Activated T-helper 1 cell treated with anti-CD3 and anti-CD28 coated beads, Interleukin-12 subunit alpha, Interleukin-12 subunit beta, Interleukin-2, Interleukin-4 antibody, amounts not matched to agents 30 ng/mL and 10 ng/mL and 1 ng/mL, durations not matched to agents 14 hours and 24 hours and 36 hours (primary cell): ENCODE measurements at regions of chr17 and their contacts with region 1.

Region 1: DNA sequence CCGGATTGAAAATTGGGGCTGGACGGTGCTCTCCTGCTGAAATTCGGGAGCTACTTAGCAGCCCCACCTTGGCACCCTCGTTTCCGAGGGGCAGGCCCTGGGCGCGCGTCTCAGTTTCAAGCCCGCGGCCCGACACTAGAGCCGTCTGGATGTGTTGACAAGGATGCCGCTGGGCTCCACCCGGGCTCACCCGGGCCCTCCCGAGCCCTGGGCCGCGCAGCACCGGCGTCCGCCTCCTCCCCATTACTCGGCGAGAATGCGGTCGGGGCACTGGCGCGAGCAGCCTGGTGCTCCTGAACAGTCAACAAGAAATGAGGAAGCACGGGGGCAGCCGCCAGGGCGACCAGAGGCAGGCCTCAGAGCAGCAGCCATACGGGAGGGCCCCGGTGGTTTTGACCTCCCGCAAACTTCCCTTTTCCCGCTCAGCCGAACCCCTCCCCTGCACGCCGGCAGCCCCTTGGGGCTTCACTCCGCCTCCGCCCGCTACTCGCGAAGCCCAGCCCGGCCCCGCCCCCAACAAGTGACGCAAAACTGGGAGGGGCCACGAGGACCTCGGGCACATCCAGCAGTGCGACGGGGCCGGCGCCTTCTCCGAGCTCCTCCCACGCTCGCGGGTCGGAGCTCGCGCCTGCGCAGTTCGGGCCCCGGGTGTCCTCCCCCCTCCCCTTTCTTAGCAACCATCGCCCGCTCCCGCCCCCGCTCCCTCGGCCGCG is 447 bp upstream of the SEC14L1 start:
- DNase-seq: peak; percentile 99
- H3K4me3 Mint-ChIP-seq: peak overlapping the region; percentile 74
- H3K27ac Mint-ChIP-seq: peak overlapping the region; percentile 96
- H3K4me1 Mint-ChIP-seq: peaks cover 64% of the 10 kb centered on the region
- H3K27me3 Mint-ChIP-seq: peaks cover 2% of the 10 kb centered on the region

Region 2: GRCh38 chr17:76726231-76726775 is 414.0 kb before region 1 on chr17 and contains the start of gene JMJD6:
- intact Hi-C with region 1: loop called (anchors 2 kb)
- DNase-seq: peak; percentile 95
- H3K4me3 Mint-ChIP-seq: peak within 1 kb of the TSS; percentile 95
- H3K27ac Mint-ChIP-seq: peak within 1 kb of the TSS; percentile 96
- H3K4me1 Mint-ChIP-seq: peaks cover 42% of the 10 kb centered on the region
- H3K27me3 Mint-ChIP-seq: no peaks in the 10 kb centered on the region
- total RNA-seq, gene JMJD6: 80.5 TPM in 2 replicates

Region 3: GRCh38 chr17:77096570-77097214 is 43.6 kb before region 1 on chr17:
- intact Hi-C with region 1: loop called (anchors 2 kb)
- DNase-seq: no peak
- H3K4me3 Mint-ChIP-seq: no peak overlapping the region
- H3K27ac Mint-ChIP-seq: no peak overlapping the region
- H3K4me1 Mint-ChIP-seq: peaks cover 36% of the 10 kb centered on the region
- H3K27me3 Mint-ChIP-seq: no peaks in the 10 kb centered on the region

Region 4: DNA sequence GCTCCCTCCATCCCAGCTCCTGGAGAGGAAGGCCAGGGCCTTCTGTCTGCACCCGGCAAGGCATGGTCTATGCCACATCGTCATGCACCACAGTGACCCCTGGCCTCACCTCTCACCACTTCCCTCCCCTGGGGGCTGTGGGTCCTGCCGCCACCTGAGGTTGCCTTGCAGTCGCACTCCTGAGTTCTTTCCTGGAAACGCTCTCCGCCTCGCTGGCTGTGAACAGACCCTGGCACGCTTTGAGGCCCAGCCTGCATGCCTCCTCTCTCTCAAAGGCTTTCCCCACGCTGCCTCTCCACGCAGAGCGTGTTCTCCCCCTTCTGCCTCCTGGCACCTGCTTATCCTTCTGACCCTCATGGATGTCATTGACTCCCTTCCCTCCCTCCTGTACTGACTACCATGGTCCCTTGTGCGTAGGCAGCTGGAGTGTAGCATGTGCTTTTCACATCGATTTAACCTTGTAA is 45.9 kb after region 1 on chr17:
- intact Hi-C with region 1: loop called (anchors 1 kb)
- DNase-seq: peak; percentile 33
- H3K4me3 Mint-ChIP-seq: no peak overlapping the region
- H3K27ac Mint-ChIP-seq: no peak overlapping the region
- H3K4me1 Mint-ChIP-seq: peaks cover 31% of the 10 kb centered on the region
- H3K27me3 Mint-ChIP-seq: no peaks in the 10 kb centered on the region

Region 5: DNA sequence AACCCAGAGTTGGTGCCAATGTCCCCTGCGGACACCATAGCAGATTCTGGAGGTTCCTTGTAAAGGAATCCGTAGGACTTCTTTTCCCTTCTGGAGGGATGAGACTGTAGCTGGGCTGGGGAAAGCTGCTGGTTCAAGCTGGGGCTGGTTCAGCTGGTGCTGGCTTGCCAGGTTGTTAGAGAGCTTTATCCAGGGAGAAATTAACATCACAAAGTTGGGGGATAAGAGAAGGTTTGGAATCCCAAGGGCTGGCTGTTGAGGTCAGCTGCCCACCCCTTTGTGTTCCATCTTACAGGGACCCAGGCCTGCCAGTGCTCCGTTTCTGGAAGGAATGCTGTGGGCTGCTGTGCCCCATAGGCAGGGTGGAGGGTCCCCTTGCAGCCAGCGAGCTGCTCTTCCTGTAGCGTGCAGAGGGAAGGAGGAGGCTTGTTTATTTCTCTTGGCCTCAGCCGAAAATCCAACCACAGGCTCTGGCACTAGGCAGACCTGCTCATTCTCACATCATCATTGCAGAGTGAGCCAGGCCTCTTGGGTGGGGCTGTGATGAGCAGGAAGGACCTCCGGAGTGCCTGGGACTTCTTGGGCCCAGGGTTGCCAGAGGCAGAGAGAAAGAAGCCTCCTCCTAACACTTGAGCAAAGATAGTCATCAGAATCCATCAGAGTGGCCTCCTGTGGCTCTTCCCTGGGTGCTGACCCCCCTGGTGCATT is 251.5 kb after region 1 on chr17:
- intact Hi-C with region 1: loop called (anchors 5 kb)
- DNase-seq: peak; percentile 61
- H3K4me3 Mint-ChIP-seq: peak overlapping the region; percentile 87
- H3K27ac Mint-ChIP-seq: peak overlapping the region; percentile 87
- H3K4me1 Mint-ChIP-seq: peaks cover 80% of the 10 kb centered on the region
- H3K27me3 Mint-ChIP-seq: no peaks in the 10 kb centered on the region